Aorta (tissue), 5 donors: ENCODE measurements at regions of chr9 and their contacts with region 1.

Region 1: GRCh38 chr9:83937911-83938323 is 16.7 kb upstream of the KIF27 start:
- DNase-seq: no peak
- ATAC-seq: peak; percentile 75
- H3K4me3 ChIP-seq: no peak overlapping the region
- H3K27ac ChIP-seq: no peak overlapping the region
- H3K4me1 ChIP-seq: no peaks in the 10 kb centered on the region
- H3K27me3 ChIP-seq: no peaks in the 10 kb centered on the region

Region 2: DNA sequence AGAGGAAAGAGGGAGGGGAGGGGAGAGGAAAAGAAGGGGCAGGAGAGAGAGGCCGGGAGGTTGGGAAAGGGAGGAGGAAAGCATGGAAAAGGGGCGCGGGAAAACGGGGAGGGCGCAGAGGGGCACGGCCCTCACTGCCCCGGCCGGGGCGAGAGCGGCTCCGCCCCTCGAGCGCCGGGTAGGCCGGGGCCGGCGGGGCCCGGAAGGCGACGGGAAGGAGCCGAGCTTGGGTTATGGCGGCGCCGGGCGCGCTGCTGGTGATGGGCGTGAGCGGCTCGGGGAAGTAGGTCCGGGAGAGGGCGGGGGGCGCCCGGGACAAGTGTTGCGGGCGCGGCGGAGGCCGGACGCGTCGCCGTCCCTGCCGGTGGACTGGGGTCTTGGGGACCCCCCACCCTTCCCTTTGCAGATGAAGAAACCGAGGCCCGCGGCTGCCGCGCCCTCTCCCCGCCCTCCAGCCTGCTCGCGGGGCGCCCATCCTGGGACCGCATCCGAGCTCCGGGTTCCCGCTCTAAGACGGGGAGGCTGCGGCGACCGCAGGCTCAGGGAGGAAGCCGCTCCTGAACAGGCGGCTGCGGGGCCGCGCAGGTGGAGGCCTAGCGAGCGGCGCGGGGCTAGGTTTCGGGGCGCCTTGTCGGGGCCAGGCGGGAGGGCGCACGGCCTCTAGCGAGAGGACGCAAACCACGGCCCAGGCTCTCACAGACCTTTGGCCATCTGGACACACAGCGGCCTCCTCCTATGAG is 314.8 kb before region 1 on chr9 and contains the start of gene IDNK:
- intact Hi-C with region 1: no loop called
- DNase-seq: peak; percentile 71 to 91
- ATAC-seq: peak; percentile 91
- H3K4me3 ChIP-seq: peak within 1 kb of the TSS; percentile 50 to 91
- H3K27ac ChIP-seq: peak within 1 kb of the TSS; percentile 36 to 89
- H3K4me1 ChIP-seq: peaks cover 0 to 1% of the 10 kb centered on the region in 2 donors
- H3K27me3 ChIP-seq: no peaks in the 10 kb centered on the region
- total RNA-seq, gene IDNK: 1.7 to 6.3 TPM

Region 3: GRCh38 chr9:83775932-83776331 is 162.0 kb before region 1 on chr9:
- intact Hi-C with region 1: no loop called
- DNase-seq: no peak
- ATAC-seq: no peak
- H3K4me3 ChIP-seq: no peak overlapping the region
- H3K27ac ChIP-seq: no peak overlapping the region
- H3K4me1 ChIP-seq: no peaks in the 10 kb centered on the region
- H3K27me3 ChIP-seq: no peaks in the 10 kb centered on the region

Region 4: DNA sequence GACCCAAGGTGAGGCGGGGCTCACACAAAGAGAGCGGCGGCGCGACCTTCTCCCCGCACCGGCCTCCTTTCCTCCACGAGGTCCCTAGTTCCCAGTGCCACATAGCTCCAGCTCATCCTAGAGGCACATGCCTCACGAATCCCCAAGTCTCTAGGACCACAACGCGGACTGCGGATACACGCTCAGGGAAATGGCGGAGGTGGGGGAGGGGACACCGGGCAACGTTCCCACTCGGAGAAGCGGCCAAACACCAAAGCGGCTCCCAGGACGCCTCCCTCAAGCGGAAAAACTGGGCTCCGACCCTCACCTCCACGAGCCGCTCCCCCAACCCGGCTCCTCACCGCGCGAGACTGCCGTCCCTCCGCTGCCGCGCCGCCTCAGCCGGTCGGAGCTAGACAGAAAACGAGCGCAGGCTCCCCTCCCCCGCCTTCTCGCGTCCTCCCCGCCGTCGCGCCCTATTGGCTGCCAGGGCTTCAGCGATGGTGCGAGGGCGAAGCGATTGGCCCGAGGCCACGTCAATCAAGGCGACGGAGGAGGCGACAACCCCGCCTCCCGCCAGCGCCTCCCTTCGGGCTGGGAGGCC is 42.0 kb after region 1 on chr9 and contains the start of gene HNRNPK:
- intact Hi-C with region 1: no loop called
- DNase-seq: peak; percentile 100
- ATAC-seq: peak; percentile 97
- H3K4me3 ChIP-seq: peak within 1 kb of the TSS; percentile 67 to 83
- H3K27ac ChIP-seq: peak within 1 kb of the TSS; percentile 86 to 91
- H3K4me1 ChIP-seq: peaks cover 0 to 3% of the 10 kb centered on the region in 2 donors
- H3K27me3 ChIP-seq: no peaks in the 10 kb centered on the region
- total RNA-seq, gene HNRNPK: 369 to 394 TPM

Region 5: GRCh38 chr9:84170521-84171141 is 232.7 kb after region 1 on chr9:
- intact Hi-C with region 1: loop called in 1 of 2 experiments (anchors 10 kb)
- DNase-seq: peak; percentile 86 to 88
- ATAC-seq: peak; percentile 80
- H3K4me3 ChIP-seq: no peak overlapping the region
- H3K27ac ChIP-seq: peak overlapping the region in 1 of 2 donors; percentile 1
- H3K4me1 ChIP-seq: no peaks in the 10 kb centered on the region
- H3K27me3 ChIP-seq: no peaks in the 10 kb centered on the region

Region 6: GRCh38 chr9:84244850-84245249 is 306.9 kb after region 1 on chr9:
- intact Hi-C with region 1: no loop called
- DNase-seq: no peak
- ATAC-seq: no peak
- H3K4me3 ChIP-seq: no peak overlapping the region
- H3K27ac ChIP-seq: no peak overlapping the region
- H3K4me1 ChIP-seq: no peaks in the 10 kb centered on the region
- H3K27me3 ChIP-seq: no peaks in the 10 kb centered on the region

Region 7: GRCh38 chr9:84261082-84261746 is 323.3 kb after region 1 on chr9:
- intact Hi-C with region 1: loop called (anchors 2 kb)
- DNase-seq: peak; percentile 82 to 94
- ATAC-seq: peak; percentile 89
- H3K4me3 ChIP-seq: peak overlapping the region in 1 of 2 donors; percentile 64
- H3K27ac ChIP-seq: no peak overlapping the region
- H3K4me1 ChIP-seq: peaks cover 0 to 2% of the 10 kb centered on the region in 2 donors
- H3K27me3 ChIP-seq: peaks cover 0 to 2% of the 10 kb centered on the region in 2 donors

Region 8: DNA sequence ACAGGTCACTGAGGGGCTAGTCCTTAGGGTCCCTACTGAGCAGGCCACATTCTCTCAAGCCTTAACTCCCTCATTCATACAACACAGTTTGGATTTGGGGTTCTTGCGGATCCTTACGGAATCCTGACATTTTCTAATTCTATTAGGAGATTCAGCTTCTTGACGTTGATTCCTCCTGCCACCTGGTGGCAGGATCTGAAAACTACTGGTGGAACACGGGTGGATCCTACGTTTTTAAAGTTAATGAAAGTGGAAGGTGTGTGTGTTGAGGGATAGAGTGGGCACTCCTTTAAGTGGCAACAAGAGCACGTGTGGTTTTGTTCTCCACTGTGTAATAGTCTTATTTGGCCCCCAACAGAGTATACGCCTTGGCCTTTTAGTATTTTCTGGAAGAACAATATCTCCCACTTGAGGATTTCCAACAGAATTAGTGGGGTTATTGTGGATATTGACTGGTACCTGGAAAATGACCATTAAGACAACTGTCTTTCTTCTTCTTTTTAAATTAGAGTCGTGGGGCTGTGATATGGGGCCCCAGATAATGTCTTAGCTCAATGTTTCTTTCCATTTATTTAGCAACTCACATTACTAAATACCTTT is 377.5 kb after region 1 on chr9:
- intact Hi-C with region 1: loop called in 1 of 2 experiments (anchors 5 kb)
- DNase-seq: peak in 1 of 2 donors; percentile 58
- ATAC-seq: no peak
- H3K4me3 ChIP-seq: no peak overlapping the region
- H3K27ac ChIP-seq: no peak overlapping the region
- H3K4me1 ChIP-seq: no peaks in the 10 kb centered on the region
- H3K27me3 ChIP-seq: no peaks in the 10 kb centered on the region